Heart right ventricle (tissue), 16 donors: ENCODE measurements at regions of chr3 and their contacts with region 1.

Region 1: GRCh38 chr3:195727606-195728195 is 6.9 kb downstream of the MUC20 start:
- DNase-seq: no peak
- ATAC-seq: no peak
- H3K4me3 ChIP-seq: no peak overlapping the region
- H3K27ac ChIP-seq: no peak overlapping the region
- H3K4me1 ChIP-seq: no peaks in the 10 kb centered on the region
- H3K27me3 ChIP-seq: peaks cover 0 to 18% (median 6%) of the 10 kb centered on the region in 7 donors
- CTCF ChIP-seq: no peak

Region 2: DNA sequence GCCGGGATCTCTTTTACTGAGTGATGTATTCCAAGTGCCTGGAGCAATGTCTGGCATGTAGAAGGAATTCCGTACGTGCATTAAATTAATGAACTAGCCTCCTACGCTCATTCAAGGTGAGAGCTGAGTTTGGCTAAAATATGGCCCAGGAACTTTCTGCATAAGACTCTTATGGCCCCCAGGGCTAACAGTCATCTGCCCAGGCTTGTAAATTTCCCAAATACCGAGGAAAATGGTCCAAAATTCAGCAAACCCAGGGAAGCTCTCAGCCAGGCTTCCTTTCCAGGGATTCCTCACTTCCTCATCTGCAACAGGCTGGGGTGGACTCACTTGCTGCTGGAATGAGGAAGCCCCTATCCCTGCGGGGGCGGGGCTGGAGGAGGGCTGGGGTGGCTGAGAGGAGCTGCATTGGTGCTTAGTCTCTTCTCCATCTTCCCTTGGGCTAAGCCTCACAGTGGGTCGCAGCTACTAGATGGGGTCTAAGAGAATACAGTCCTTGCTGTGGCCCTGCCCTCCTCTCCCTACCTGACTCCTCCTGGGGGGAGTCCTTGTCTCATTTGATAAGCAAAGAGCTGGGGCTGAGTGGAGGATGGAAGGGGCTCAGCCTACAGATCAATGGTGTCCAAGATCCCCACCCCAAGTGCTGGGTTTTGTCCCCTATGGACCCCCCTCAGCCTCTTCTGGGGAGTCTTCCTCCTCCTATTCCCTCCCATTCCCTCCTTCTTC is 115.5 kb before region 1 on chr3:
- intact Hi-C with region 1: loop called in 3 of 10 experiments (anchors 5 to 10 kb)
- DNase-seq: no peak
- ATAC-seq: peak in 4 of 8 donors; percentile 24 to 55 (median 42)
- H3K4me3 ChIP-seq: no peak overlapping the region
- H3K27ac ChIP-seq: peak overlapping the region in 2 of 10 donors; percentile 13 to 31
- H3K4me1 ChIP-seq: peaks cover 0 to 18% (median 5%) of the 10 kb centered on the region in 9 donors
- H3K27me3 ChIP-seq: no peaks in the 10 kb centered on the region
- CTCF ChIP-seq: no peak

Region 3: DNA sequence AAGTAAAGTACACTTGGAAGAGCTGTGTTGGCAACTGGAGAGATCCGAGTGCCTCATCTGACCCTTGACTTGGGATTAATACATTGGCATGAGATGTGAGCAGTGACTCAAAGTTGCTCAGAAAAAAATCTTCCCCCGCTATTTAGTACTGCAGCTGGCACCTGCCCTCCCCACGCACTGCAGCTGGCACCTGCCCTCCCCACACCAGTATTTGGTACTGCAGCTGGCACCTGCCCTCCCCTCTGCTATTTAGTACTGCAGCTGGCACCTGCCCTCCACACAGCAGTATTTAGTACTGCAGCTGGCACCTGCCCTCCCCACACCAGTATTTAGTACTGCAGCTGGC is 10.9 kb before region 1 on chr3:
- intact Hi-C with region 1: loop called in 1 of 10 experiments (anchors 1 kb)
- DNase-seq: no peak
- ATAC-seq: peak in 5 of 8 donors; percentile 8 to 29 (median 12)
- H3K4me3 ChIP-seq: no peak overlapping the region
- H3K27ac ChIP-seq: no peak overlapping the region
- H3K4me1 ChIP-seq: no peaks in the 10 kb centered on the region
- H3K27me3 ChIP-seq: no peaks in the 10 kb centered on the region
- CTCF ChIP-seq: no peak

Region 4: GRCh38 chr3:195748661-195749060 is 21.0 kb after region 1 on chr3:
- intact Hi-C with region 1: loop called in 3 of 10 experiments (anchors 2 kb)
- DNase-seq: no peak
- ATAC-seq: peak in 3 of 8 donors; percentile 22 to 25 (median 23)
- H3K4me3 ChIP-seq: no peak overlapping the region
- H3K27ac ChIP-seq: no peak overlapping the region
- H3K4me1 ChIP-seq: peaks cover 0 to 9% (median 0%) of the 10 kb centered on the region in 9 donors
- H3K27me3 ChIP-seq: peaks cover 0 to 30% (median 7%) of the 10 kb centered on the region in 7 donors
- CTCF ChIP-seq: no peak